ENCODE measurements at regions of chr20 and their contacts with region 1.

Region 1: DNA sequence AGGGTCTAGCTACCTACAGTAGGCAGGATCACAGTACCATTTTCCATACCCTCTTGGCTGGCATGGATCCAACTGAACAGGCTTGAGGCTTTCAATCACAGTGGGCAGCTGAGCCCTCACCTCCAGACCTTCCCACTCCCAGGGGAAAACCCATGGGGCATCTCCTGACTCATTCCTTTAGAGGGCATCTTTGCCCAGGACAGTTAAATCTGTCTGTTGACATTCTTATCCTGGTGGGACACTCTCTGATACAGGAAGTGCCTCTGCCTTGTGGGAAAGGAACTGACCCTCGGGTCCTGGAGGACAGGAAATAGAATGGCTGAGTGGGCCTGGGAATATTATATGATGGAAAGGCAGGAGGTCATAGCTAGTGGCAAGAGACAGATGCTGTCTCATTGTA is 10.2 kb upstream of the EPB41L1 start:
- DNase-seq: no peak
- ATAC-seq: no peak
- H3K4me3 Mint-ChIP-seq: no peak overlapping the region
- H3K27ac Mint-ChIP-seq: no peak overlapping the region
- H3K4me1 Mint-ChIP-seq: peaks cover 2% of the 10 kb centered on the region
- H3K27me3 Mint-ChIP-seq: peaks cover 9% of the 10 kb centered on the region

Region 2: DNA sequence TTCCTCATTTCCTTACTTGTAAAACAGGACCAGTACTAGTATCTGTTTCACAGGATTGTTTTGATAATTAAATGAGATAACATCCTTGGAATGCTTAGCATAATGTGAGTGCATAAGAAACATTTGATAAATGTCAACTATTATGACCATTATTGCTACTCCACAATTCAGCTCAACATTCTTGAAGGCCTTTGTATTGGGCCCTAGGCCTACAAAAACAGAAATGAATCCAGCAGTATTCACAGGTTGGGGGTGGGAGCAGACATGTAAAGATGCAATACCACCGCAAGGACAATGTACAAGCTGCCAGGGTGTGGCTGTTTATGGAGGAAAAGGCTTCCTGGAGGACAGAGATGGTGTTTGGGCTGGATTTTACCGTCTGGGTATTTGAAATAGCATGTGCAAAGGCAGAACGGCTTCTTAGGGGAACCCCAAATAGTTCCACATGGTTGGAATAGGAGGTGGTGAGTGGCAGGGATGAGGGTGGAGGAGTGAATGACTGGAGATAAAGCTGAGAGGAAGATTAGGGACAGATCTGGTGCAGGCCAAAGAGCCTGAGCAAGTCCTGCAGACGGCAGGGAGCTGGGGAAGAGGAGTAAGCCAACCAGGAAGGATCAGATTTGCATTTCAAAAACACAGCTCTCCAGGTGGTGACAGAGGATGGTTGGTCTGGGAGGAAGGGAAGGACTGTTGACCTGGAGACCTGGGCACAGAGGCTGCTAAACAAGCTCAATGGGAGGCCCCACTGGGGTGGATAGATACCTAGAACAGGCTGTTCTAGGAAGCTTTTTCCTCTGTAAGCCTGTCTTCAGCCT is 46.8 kb before region 1 on chr20:
- CTCF ChIA-PET with region 1: interaction called, 11 read pairs
- POLR2A ChIA-PET with region 1: no interaction called
- intact Hi-C with region 1: no loop called
- DNase-seq: no peak
- ATAC-seq: no peak
- H3K4me3 Mint-ChIP-seq: no peak overlapping the region
- H3K27ac Mint-ChIP-seq: no peak overlapping the region
- H3K4me1 Mint-ChIP-seq: peaks cover 10% of the 10 kb centered on the region
- H3K27me3 Mint-ChIP-seq: peaks cover 16% of the 10 kb centered on the region

Region 3: DNA sequence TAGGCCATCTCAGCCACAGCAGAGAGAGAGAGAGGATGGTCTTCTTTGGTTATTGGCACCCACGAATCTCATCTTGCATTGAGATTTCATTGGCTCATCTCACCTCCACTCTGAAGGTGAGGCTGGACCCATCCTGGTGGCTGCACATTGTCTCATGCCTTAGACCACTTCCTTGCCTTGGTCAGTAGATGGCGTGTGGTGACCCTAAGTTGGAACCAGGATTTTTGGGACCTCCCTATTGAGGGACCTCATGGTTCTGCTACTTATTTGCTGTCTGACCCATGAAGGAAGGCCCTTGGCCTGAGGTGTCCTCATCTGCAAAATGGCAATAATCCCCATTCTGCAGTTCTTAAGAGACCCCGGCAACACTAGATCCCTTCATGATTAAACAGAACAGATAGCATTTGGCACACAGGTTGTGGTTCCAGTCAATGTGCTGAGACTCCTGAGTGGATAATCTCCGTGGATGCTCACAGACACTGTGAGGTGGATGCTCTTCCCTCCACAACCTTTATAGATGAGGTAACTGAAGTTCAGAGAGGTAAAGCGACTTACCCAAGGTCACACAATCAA is 70.4 kb after region 1 on chr20:
- CTCF ChIA-PET with region 1: no interaction called
- POLR2A ChIA-PET with region 1: no interaction called
- intact Hi-C with region 1: no loop called
- DNase-seq: peak; percentile 31
- ATAC-seq: peak; percentile 47
- H3K4me3 Mint-ChIP-seq: no peak overlapping the region
- H3K27ac Mint-ChIP-seq: no peak overlapping the region
- H3K4me1 Mint-ChIP-seq: no peaks in the 10 kb centered on the region
- H3K27me3 Mint-ChIP-seq: no peaks in the 10 kb centered on the region

Measured in activated CD4-positive, alpha-beta T cell treated with anti-CD3 and anti-CD28 coated beads for 36 hours (primary cell).